ENCODE measurements at regions of chr14 and their contacts with region 1.

Region 1: DNA sequence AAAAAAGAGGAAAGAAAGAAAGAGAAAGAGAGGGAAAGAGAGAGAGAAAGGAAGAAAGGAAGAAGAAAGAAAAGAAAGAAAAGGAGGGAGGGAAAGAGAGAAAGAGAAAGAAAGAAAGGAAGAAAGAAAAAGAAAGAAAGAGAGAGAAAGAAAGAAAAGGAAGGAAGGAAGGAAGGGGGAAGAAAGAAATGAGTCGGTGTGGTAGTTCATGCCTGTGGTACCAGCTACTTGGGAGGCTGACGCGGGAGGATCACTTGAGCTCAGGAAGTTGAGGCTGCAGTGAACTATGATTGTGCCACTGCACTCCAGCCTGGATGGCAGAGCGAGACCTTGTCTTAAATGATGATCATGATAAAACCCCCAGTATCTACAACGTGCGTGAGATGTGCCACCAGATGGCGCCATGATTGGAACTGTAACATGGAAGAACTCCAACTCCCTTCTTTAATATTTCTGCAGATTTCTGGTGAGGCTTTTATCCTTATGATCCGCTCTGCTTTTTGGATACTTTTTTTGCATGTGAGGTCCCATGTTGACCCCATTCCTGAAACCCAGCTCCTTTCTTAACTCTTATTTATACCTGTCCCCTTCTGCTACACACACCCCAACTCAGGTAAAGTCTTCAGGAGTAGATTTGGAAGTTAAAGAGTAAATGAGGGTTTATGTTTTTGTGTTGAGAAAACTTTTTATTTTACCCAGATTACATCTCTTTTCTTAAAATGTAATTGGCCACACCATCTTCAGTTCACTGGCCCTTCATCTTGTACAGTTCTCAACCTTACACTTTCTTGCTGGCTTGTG is 25.6 kb downstream of the RNASE10 start:
- DNase-seq: peak; percentile 39 to 80 (median 54)
- H3K4me3 ChIP-seq: no peak overlapping the region
- H3K4me3 Mint-ChIP-seq: peak overlapping the region in 3 of 7 donors; percentile 20 to 63 (median 22)
- H3K27ac ChIP-seq: no peak overlapping the region
- H3K27ac Mint-ChIP-seq: peak overlapping the region in 1 of 8 donors; percentile 43
- H3K4me1 ChIP-seq: peaks cover 8% of the 10 kb centered on the region
- H3K4me1 Mint-ChIP-seq: peaks cover 8 to 9% (median 8%) of the 10 kb centered on the region in 3 donors
- H3K27me3 ChIP-seq: no peaks in the 10 kb centered on the region
- H3K27me3 Mint-ChIP-seq: peaks cover 4 to 19% of the 10 kb centered on the region in 2 donors

Region 2: DNA sequence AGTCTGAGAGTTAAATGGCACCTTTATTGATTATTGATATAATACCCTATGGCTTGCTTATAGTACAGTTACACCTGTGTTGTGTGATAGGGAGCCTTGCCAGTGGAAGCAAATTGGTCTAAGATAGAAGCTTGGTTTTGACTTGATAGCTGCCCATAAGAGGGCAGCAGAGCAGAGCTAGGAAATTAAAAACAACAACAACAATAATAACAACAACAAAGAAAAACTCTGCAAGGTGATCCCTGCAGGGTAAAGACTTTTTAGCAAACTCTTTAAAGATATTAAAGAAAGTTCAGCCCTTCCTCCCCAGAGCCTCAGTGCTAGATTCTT is 43.6 kb before region 1 on chr14:
- CTCF ChIA-PET with region 1: no interaction called
- POLR2A ChIA-PET with region 1: interaction called, 11 read pairs
- DNase-seq: no peak
- H3K4me3 ChIP-seq: no peak overlapping the region
- H3K4me3 Mint-ChIP-seq: peak overlapping the region in 6 of 7 donors; percentile 45 to 80 (median 54)
- H3K27ac ChIP-seq: no peak overlapping the region
- H3K27ac Mint-ChIP-seq: peak overlapping the region; percentile 12 to 90 (median 75)
- H3K4me1 ChIP-seq: peaks cover 62% of the 10 kb centered on the region
- H3K4me1 Mint-ChIP-seq: peaks cover 67 to 90% (median 85%) of the 10 kb centered on the region in 3 donors
- H3K27me3 ChIP-seq: no peaks in the 10 kb centered on the region
- H3K27me3 Mint-ChIP-seq: no peaks in the 10 kb centered on the region

Measured in CD8-positive, alpha-beta memory T cell (primary cell).